B cell (primary cell): ENCODE measurements at regions of chr6 and their contacts with region 1.

Region 1: DNA sequence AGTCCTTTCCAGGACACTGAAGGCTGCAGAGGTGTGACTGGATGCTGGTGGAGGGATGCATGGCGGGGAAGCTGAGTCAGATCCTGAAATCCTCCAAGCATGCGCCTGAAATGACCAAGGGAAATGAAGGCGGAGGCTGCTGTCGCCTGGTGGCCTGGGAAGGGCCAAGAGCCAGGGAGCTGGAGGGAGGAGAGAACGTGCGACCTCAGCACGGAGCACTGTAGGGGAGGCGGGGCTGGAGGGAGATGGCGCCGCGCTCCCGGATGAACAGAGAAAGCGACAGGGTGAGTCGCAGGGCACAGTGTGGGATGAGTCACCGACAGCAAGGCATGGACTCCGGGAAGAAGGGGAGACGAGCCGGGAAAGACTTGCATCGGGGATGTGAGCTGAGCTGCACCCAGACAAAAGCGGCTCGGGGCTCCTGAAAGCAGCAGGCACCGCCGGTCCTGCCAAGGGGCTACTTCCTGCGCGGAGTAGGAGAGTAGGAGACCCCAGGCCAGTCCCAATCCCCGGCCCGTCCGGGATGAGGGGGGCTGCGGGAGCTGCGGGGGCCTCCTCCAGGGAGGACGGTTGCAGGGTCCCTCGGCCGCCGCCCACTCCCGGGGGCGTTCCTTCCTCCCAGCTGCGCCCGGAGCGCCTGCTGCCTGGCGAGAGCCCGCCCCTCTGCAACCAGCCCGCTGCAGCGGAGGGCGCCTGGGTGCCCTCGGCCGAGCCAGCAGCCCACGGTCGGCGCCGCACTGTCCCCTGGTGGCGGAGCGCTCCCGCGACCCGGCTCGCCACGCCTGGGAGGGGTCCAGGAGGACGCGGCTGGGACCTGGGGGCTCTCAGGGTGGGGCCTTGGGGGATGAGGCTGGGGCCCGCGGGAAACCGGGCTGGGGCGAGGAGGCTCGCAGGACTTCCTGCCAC is 11.0 kb upstream of the NQO2 start:
- DNase-seq: peak; percentile 90
- ATAC-seq: peak; percentile 80
- H3K4me3 ChIP-seq: peak overlapping the region; percentile 79 to 93 (median 91)
- H3K4me3 Mint-ChIP-seq: peak overlapping the region; percentile 98
- H3K27ac ChIP-seq: peak overlapping the region; percentile 94 to 97
- H3K27ac Mint-ChIP-seq: peak overlapping the region; percentile 100
- H3K4me1 ChIP-seq: peaks cover 10 to 22% of the 10 kb centered on the region in 2 donors
- H3K4me1 Mint-ChIP-seq: peaks cover 25% of the 10 kb centered on the region
- H3K27me3 ChIP-seq: no peaks in the 10 kb centered on the region
- H3K27me3 Mint-ChIP-seq: peaks cover 2% of the 10 kb centered on the region
- CTCF ChIP-seq: peak; percentile 88

Region 2: DNA sequence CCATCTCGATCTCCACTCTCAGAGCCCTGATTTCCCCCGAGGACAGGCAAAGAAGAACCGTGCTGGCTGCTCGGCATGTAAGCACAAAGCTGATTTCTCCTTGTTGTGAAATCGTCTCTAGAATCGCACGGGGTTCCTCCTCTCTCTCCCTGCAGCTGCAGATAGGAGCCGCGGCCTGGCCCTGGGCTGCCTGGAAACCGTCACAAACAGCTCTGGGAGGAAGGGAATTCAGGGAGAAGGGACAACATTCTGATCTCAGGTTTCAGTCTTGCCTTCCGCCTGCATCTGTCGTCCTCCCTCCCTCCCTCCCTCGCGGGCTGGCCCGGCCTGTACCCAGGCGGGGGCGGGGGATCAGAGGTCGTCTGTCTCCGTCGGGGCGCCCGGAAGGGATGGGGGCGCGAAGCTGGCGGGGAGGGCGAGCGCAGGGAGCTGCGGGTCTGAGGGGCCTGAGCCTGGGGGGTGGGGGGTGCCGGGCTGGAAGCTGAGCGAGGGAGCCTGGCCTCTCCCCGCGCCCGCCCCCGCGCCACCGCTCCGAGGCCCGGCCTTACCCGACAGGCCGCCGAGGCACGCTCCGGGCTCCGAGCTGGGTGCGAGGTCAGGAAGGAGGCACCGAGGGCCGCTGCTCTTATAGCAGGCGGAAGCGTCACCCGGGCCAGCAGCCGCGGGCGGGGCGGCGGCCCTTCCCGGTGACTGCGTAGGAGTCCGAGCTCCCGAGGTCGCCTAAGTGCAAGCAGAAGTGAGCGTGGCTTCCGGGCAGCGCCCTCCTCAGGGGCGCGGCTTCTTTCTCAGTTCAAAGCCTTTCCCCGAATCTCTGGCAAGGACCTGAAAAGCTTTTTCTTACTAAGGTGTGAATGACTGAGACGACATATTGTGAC is 147.2 kb before region 1 on chr6 and contains the start of gene SERPINB1:
- CTCF ChIA-PET with region 1: interaction called, 103 read pairs
- POLR2A ChIA-PET with region 1: interaction called, 23 read pairs
- intact Hi-C with region 1: loop called (anchors 1 kb)
- DNase-seq: peak; percentile 86
- ATAC-seq: peak; percentile 79
- H3K4me3 ChIP-seq: peak within 1 kb of the TSS; percentile 55 to 85 (median 72)
- H3K4me3 Mint-ChIP-seq: peak within 1 kb of the TSS; percentile 90
- H3K27ac ChIP-seq: peak within 1 kb of the TSS; percentile 61 to 87
- H3K27ac Mint-ChIP-seq: peak within 1 kb of the TSS; percentile 96
- H3K4me1 ChIP-seq: peaks cover 35 to 45% of the 10 kb centered on the region in 2 donors
- H3K4me1 Mint-ChIP-seq: peaks cover 50% of the 10 kb centered on the region
- H3K27me3 ChIP-seq: no peaks in the 10 kb centered on the region
- H3K27me3 Mint-ChIP-seq: no peaks in the 10 kb centered on the region
- CTCF ChIP-seq: no peak
- total RNA-seq, gene SERPINB1: 47.4 and 52.5 TPM in 2 replicates

Region 3: DNA sequence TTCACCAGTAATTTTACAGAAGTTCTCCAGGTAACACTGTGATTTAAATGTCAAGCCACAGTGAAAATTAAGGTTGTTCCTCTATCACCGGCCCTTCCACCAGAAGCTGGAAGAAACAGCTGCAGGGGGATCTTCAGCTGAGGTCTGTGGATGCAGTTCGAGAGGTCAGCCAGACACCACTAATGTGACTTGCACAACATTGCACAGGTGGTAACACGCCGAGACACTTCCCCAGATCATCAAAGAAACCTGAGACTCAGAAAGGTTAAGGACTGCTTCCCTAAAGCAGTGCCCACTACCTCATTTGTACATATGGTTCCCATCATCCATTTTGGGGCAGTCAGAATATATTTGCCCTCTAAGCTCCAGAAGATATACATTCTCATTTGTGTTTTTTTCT is 77.5 kb before region 1 on chr6:
- CTCF ChIA-PET with region 1: interaction called, 10 read pairs
- POLR2A ChIA-PET with region 1: no interaction called
- intact Hi-C with region 1: loop called (anchors 1 kb)
- DNase-seq: peak; percentile 78
- ATAC-seq: peak; percentile 83
- H3K4me3 ChIP-seq: no peak overlapping the region
- H3K4me3 Mint-ChIP-seq: peak overlapping the region; percentile 64
- H3K27ac ChIP-seq: peak overlapping the region; percentile 54 to 62
- H3K27ac Mint-ChIP-seq: peak overlapping the region; percentile 85
- H3K4me1 ChIP-seq: peaks cover 24 to 27% of the 10 kb centered on the region in 2 donors
- H3K4me1 Mint-ChIP-seq: peaks cover 36% of the 10 kb centered on the region
- H3K27me3 ChIP-seq: no peaks in the 10 kb centered on the region
- H3K27me3 Mint-ChIP-seq: no peaks in the 10 kb centered on the region
- CTCF ChIP-seq: no peak

Region 4: DNA sequence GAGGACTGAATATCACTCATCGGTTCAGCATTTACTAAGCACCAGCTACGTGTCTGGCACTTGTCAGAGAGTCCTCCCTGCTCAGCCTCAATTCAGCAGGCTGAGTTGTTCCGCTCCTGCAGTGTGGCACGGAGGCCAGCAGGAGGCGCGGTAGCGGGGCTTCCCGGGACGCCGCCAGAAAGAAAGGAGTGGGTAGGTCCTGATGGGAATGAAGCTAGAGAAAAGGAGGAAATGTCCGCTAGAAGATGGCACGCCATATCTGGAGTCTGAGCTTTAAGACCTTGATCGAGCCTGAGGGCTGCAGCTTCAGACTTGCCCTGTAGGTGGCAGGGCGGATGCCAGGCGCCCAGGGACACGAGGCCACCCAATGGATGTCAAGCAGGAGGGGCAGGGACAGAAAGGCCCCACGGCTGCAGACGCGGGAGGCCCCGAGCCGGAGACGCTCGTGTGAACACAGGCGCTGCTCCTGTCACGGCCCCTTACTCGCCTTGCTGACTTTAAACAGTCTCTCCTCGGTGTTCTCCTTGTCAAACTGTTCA is 36.1 kb before region 1 on chr6:
- CTCF ChIA-PET with region 1: interaction called, 53 read pairs
- POLR2A ChIA-PET with region 1: interaction called, 8 read pairs
- intact Hi-C with region 1: loop called (anchors 1 kb)
- DNase-seq: peak; percentile 69
- ATAC-seq: peak; percentile 97
- H3K4me3 ChIP-seq: peak overlapping the region in 1 of 5 experiments; percentile 15
- H3K4me3 Mint-ChIP-seq: peak overlapping the region; percentile 71
- H3K27ac ChIP-seq: no peak overlapping the region
- H3K27ac Mint-ChIP-seq: no peak overlapping the region
- H3K4me1 ChIP-seq: peaks cover 0 to 17% of the 10 kb centered on the region in 2 donors
- H3K4me1 Mint-ChIP-seq: peaks cover 12% of the 10 kb centered on the region
- H3K27me3 ChIP-seq: no peaks in the 10 kb centered on the region
- H3K27me3 Mint-ChIP-seq: no peaks in the 10 kb centered on the region
- CTCF ChIP-seq: peak; percentile 90

Region 5: DNA sequence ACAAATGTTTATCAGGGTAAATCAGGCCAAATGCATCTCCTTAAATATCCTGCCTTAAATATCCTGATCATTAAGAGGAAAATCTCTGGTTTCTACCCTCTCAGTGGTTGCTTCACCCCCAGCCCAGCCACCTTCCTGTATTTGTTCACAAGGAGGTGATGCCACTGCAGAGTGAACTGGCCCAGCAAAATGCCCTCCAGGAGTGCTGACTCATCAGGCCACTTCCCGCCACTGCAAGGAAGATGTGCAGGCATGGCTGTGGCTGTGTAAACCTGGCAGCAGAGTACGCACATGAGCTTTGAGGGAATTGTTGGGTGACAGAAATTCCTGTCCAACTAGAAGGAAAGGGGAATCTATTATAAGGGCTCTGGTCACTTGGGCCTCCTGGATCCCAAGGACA is 24.8 kb after region 1 on chr6:
- CTCF ChIA-PET with region 1: no interaction called
- POLR2A ChIA-PET with region 1: no interaction called
- intact Hi-C with region 1: no loop called
- DNase-seq: no peak
- ATAC-seq: no peak
- H3K4me3 ChIP-seq: no peak overlapping the region
- H3K4me3 Mint-ChIP-seq: no peak overlapping the region
- H3K27ac ChIP-seq: no peak overlapping the region
- H3K27ac Mint-ChIP-seq: no peak overlapping the region
- H3K4me1 ChIP-seq: no peaks in the 10 kb centered on the region
- H3K4me1 Mint-ChIP-seq: no peaks in the 10 kb centered on the region
- H3K27me3 ChIP-seq: no peaks in the 10 kb centered on the region
- H3K27me3 Mint-ChIP-seq: no peaks in the 10 kb centered on the region
- CTCF ChIP-seq: no peak

Region 6: GRCh38 chr6:3023663-3024483 is 35.2 kb after region 1 on chr6:
- CTCF ChIA-PET with region 1: interaction called, 7 read pairs
- POLR2A ChIA-PET with region 1: interaction called, 6 read pairs
- intact Hi-C with region 1: loop called (anchors 5 kb)
- DNase-seq: peak; percentile 82
- ATAC-seq: peak; percentile 79
- H3K4me3 ChIP-seq: peak overlapping the region; percentile 45 to 88 (median 63)
- H3K4me3 Mint-ChIP-seq: peak overlapping the region; percentile 91
- H3K27ac ChIP-seq: peak overlapping the region; percentile 38 to 50
- H3K27ac Mint-ChIP-seq: peak overlapping the region; percentile 74
- H3K4me1 ChIP-seq: peaks cover 59 to 63% of the 10 kb centered on the region in 2 donors
- H3K4me1 Mint-ChIP-seq: peaks cover 50% of the 10 kb centered on the region
- H3K27me3 ChIP-seq: peaks cover 0 to 4% (median 0%) of the 10 kb centered on the region in 4 experiments
- H3K27me3 Mint-ChIP-seq: peaks cover 5% of the 10 kb centered on the region
- CTCF ChIP-seq: no peak

Region 7: DNA sequence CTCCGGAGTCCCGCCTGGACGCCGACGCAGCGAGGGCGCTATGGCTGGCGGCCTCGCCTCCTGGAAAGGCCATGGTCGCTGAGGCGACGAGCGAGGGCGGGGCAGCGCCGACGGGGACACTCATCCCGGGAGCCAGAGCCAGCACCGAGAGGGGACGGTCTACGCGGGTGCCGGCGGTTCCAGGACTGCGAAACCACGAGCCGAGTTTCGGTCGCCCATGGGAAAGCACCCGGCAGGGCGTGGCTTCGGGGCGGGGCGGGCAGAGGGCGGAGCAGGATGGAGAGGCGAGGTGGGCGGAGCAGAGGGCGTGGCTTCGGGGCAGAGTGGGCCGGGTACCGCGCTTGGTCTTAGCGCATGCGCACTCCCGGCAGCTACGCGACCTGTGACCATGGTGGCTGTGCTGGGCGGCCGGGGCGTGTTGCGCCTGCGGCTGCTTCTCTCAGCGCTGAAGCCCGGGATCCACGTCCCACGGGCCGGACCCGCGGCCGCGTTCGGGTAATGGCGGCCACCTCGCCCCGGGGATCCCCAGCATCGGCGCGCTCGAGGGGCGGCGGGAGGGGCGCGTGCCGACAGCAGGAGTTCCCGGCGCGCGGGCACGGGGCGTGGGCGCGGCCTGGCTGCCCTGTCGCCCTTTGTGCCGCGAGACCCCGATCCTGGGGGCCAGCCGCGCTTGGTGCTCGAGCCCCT is 129.8 kb after region 1 on chr6 and contains the start of gene BPHL:
- CTCF ChIA-PET with region 1: interaction called, 3 read pairs
- POLR2A ChIA-PET with region 1: no interaction called
- intact Hi-C with region 1: loop called (anchors 2 kb)
- DNase-seq: peak; percentile 99
- ATAC-seq: peak; percentile 93
- H3K4me3 ChIP-seq: peak within 1 kb of the TSS; percentile 66 to 98 (median 78)
- H3K4me3 Mint-ChIP-seq: peak within 1 kb of the TSS; percentile 97
- H3K27ac ChIP-seq: peak within 1 kb of the TSS; percentile 93 to 95
- H3K27ac Mint-ChIP-seq: peak within 1 kb of the TSS; percentile 98
- H3K4me1 ChIP-seq: peaks cover 12% of the 10 kb centered on the region in 2 donors
- H3K4me1 Mint-ChIP-seq: peaks cover 18% of the 10 kb centered on the region
- H3K27me3 ChIP-seq: no peaks in the 10 kb centered on the region
- H3K27me3 Mint-ChIP-seq: no peaks in the 10 kb centered on the region
- CTCF ChIP-seq: no peak
- total RNA-seq, gene BPHL: 14.3 and 16.3 TPM in 2 replicates